Activated CD4-positive, alpha-beta T cell treated with anti-CD3 and anti-CD28 coated beads for 36 hours (primary cell): ENCODE measurements at regions of chr11 and their contacts with region 1.

Region 1: DNA sequence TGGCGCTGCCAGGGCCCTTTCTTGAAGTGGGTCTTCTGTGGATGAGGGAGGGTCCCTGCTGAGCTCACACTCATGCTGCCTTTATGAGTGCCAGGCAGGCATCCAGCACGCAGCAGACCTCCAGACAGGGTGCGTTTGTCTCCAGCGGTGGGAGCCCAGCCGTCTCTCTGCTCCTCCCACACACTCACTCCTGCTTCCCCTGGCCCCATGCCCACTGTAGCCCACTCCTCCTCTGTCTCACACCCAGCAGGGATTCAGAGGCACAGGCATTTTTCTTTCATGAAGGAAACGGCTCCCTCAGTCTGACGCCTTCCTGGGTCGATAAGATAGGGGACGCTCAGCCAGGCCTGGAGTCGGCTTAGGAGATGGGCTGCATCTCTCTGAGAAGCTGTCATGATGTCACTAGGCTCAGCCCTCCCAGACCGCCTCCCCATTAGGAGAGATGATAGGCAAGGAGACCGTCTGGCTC is 183.9 kb upstream of the NCAM1 start:
- DNase-seq: no peak
- ATAC-seq: no peak
- H3K4me3 Mint-ChIP-seq: no peak overlapping the region
- H3K27ac Mint-ChIP-seq: no peak overlapping the region
- H3K4me1 Mint-ChIP-seq: no peaks in the 10 kb centered on the region
- H3K27me3 Mint-ChIP-seq: peaks cover 7% of the 10 kb centered on the region

Region 2: GRCh38 chr11:112718483-112718882 is 58.8 kb before region 1 on chr11:
- CTCF ChIA-PET with region 1: no interaction called
- POLR2A ChIA-PET with region 1: no interaction called
- intact Hi-C with region 1: loop called in 1 of 2 experiments (anchors 10 kb)
- DNase-seq: no peak
- ATAC-seq: no peak
- H3K4me3 Mint-ChIP-seq: no peak overlapping the region
- H3K27ac Mint-ChIP-seq: no peak overlapping the region
- H3K4me1 Mint-ChIP-seq: no peaks in the 10 kb centered on the region
- H3K27me3 Mint-ChIP-seq: peaks cover 26% of the 10 kb centered on the region

Region 3: GRCh38 chr11:112795142-112795815 is 18.0 kb after region 1 on chr11:
- CTCF ChIA-PET with region 1: no interaction called
- POLR2A ChIA-PET with region 1: no interaction called
- intact Hi-C with region 1: no loop called
- DNase-seq: peak; percentile 64
- ATAC-seq: peak; percentile 72
- H3K4me3 Mint-ChIP-seq: no peak overlapping the region
- H3K27ac Mint-ChIP-seq: no peak overlapping the region
- H3K4me1 Mint-ChIP-seq: peaks cover 2% of the 10 kb centered on the region
- H3K27me3 Mint-ChIP-seq: no peaks in the 10 kb centered on the region

Region 4: DNA sequence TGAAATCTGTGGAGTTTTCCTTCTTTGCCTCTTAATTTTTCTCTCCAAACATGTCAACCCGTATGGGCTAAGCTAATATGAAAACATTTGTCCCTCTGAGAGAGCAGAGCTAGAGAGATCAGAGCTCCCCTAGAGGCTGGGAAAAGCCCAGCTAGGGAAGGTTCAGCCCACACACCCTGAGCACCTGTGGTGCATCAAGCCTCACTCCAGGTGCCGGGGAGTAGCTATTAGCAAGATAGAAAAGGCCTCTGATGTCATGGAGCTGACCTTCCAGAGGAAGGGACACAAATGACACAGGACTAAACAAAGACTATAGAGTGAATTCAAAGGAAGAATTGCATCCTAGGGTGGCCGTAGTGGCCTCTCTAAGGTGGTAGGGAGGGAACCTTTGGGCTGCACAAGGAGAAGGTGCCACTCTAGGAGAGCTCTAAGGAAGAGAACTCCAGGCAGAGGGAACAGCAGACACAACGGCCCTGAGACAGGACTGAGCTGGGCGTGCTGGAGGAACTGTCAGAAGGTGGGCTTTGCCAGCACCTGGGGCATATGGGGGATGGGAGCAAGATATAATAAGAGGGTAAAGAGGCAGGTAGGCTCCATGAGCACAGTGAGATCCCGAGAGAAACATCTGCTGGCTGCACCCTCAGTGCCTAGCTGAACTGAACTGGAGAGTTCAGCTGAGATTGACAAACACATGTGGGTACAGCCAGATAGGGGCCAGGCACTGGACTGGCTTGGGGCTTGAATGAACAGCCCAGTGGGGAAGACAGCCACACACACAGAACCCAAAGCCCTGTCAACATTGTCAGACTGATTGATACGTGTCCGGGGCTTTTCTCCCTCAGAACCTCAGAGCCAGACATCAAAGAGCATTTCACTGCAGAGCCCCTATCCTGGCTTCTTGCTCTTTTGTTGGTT is 763.4 kb after region 1 on chr11:
- CTCF ChIA-PET with region 1: no interaction called
- POLR2A ChIA-PET with region 1: no interaction called
- intact Hi-C with region 1: no loop called
- DNase-seq: no peak
- ATAC-seq: no peak
- H3K4me3 Mint-ChIP-seq: no peak overlapping the region
- H3K27ac Mint-ChIP-seq: no peak overlapping the region
- H3K4me1 Mint-ChIP-seq: no peaks in the 10 kb centered on the region
- H3K27me3 Mint-ChIP-seq: peaks cover 8% of the 10 kb centered on the region